ENCODE measurements at regions of chr12 and their contacts with region 1.

Region 1: DNA sequence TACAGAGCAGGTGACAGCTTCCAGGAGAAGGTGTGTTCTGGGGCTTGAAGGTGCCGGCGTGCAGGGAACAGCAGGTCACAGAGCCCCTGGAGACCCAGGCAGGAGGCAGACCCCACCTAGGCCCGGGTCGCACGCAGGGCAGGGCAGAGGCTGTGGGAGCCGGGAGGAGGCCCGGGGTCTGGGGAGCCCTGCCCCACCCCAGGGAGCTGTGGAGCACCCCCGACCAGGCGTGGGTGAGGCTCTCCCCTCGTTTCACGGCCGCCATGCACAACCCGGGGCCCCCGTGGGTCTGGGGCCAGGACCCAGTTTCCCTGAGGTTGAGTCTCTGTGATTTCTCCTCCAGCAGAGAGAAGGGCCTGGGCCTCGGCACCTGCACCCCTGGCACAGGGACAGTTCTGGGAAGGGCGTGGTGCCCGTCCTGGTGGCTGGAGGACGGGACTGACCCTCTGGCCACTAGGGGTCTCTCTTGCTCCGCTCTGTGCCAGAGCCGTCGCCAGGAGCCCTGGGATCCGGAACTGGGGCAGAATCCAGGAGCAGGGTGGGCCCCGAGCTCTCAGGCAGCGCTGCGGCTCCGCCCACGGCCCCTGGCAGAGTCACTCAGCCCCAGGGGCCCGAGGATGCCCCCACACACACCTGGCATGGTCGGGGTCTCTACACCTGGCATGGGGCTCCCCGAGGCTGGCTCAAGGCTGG is 75.2 kb upstream of the FBRSL1 start:
- DNase-seq: peak; percentile 74 to 89
- ATAC-seq: peak; percentile 95 to 99 (median 97)
- H3K4me3 ChIP-seq: no peak overlapping the region
- H3K27ac ChIP-seq: no peak overlapping the region
- H3K4me1 ChIP-seq: no peaks in the 10 kb centered on the region
- H3K27me3 ChIP-seq: peaks cover 0 to 53% (median 9%) of the 10 kb centered on the region in 3 donors
- CTCF ChIP-seq: peak; percentile 91

Region 2: DNA sequence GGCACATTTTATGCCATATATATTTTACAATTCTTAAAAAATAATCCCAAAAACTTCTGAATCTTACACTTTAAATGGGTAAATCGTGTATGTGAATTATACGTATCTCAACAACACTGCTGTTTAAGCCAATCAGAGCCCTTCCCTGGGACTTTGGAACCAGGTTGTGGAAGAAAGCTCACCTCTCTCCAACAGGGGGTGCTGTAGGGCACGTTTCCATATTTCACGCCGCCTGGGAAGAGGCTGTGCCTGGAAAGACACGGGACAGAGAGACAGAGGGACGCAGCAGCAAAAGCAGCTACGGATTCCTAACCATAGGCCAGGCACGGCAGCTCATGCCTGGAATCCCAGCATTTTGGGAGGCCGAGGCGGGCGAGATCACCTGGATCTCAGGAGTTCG is 45.8 kb after region 1 on chr12:
- intact Hi-C with region 1: no loop called
- DNase-seq: no peak
- ATAC-seq: no peak
- H3K4me3 ChIP-seq: no peak overlapping the region
- H3K27ac ChIP-seq: no peak overlapping the region
- H3K4me1 ChIP-seq: no peaks in the 10 kb centered on the region
- H3K27me3 ChIP-seq: peaks cover 0 to 26% (median 3%) of the 10 kb centered on the region in 3 donors
- CTCF ChIP-seq: peak; percentile 5

Region 3: GRCh38 chr12:132506328-132507160 is 91.8 kb after region 1 on chr12:
- intact Hi-C with region 1: no loop called
- DNase-seq: peak; percentile 86 to 94
- ATAC-seq: peak; percentile 87 to 93 (median 92)
- H3K4me3 ChIP-seq: peak overlapping the region; percentile 53
- H3K27ac ChIP-seq: peak overlapping the region; percentile 75
- H3K4me1 ChIP-seq: peaks cover 58% of the 10 kb centered on the region
- H3K27me3 ChIP-seq: no peaks in the 10 kb centered on the region
- CTCF ChIP-seq: no peak

Region 4: GRCh38 chr12:132523576-132524331 is 109.0 kb after region 1 on chr12:
- intact Hi-C with region 1: loop called (anchors 1 to 2 kb)
- DNase-seq: peak; percentile 73 to 87
- ATAC-seq: peak; percentile 80 to 91 (median 84)
- H3K4me3 ChIP-seq: no peak overlapping the region
- H3K27ac ChIP-seq: no peak overlapping the region
- H3K4me1 ChIP-seq: peaks cover 4% of the 10 kb centered on the region
- H3K27me3 ChIP-seq: no peaks in the 10 kb centered on the region
- CTCF ChIP-seq: peak; percentile 88

Region 5: GRCh38 chr12:132614861-132615578 is 200.2 kb after region 1 on chr12:
- intact Hi-C with region 1: loop called (anchors 5 kb)
- DNase-seq: peak; percentile 82 to 87
- ATAC-seq: peak; percentile 57 to 84 (median 72)
- H3K4me3 ChIP-seq: no peak overlapping the region
- H3K27ac ChIP-seq: no peak overlapping the region
- H3K4me1 ChIP-seq: no peaks in the 10 kb centered on the region
- H3K27me3 ChIP-seq: peaks cover 0 to 69% (median 35%) of the 10 kb centered on the region in 3 donors
- CTCF ChIP-seq: peak; percentile 72

Region 6: DNA sequence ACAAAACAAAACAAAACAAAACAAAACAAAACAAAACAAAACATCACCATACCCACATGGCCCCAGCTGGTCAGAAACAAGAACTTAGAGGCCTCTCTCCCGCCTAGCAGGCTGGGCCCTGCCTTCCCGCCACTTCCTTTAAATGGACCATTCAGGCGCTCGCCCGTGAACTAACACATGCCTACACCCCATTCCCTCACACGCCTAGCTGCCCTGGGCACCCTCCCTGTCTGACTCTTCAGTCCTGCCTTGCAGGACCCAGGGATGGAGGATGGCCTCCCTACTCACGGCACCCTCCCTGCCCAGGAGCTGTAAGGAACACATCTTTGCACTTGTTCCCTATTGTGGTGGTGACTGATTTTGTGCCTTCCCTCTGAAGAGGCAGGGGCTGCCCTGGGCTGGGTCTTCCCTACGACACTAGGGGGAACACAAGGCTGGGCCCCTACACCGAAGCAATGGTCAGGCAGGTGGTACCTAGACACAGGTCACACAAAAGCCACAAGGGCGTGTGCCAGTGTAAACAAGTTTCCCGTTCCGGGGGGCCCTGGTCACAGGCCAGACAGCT is 225.3 kb after region 1 on chr12:
- intact Hi-C with region 1: loop called in 1 of 2 experiments (anchors 2 kb)
- DNase-seq: no peak
- ATAC-seq: no peak
- H3K4me3 ChIP-seq: no peak overlapping the region
- H3K27ac ChIP-seq: no peak overlapping the region
- H3K4me1 ChIP-seq: no peaks in the 10 kb centered on the region
- H3K27me3 ChIP-seq: no peaks in the 10 kb centered on the region
- CTCF ChIP-seq: no peak

Measured in psoas muscle (tissue), 8 donors.